ENCODE measurements at regions of chr16 and their contacts with region 1.

Region 1: DNA sequence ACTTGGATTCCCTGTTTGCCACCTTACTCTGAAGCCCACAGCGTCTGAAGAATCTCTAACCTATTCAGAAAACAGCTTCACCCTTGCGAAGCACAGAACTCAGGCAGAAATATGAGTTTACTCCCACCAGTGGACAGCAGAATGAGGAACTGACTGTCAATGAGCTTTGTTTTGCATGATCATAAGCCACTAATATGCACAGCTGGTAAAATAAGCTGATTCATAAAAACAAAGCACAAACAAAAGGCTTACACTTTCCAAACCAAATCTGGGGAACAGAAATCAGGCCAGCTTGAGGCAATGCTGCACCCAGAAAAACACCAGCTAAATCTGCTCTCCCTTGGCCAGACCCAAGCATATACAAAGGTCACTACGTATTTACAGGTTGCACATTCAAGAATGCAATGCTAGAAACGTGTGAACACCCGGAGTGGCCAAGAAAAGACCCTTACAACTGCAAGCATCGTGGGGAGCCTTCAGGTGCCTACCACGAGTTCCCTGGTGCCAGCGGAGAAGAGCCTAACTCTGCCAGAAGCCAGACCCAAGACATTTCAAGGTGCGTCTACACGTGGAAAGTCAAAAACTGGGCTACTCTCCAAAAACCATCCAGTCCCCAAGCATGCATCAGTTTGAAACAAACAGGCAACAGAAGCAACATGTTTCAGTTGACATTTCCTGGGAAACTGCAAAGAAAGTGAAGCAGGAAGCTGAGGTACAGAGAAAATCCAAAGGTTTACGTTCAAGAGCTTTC is 207.1 kb downstream of the ZFHX3 start:
- DNase-seq: no peak
- ATAC-seq: no peak
- H3K4me3 ChIP-seq: no peak overlapping the region
- H3K27ac ChIP-seq: no peak overlapping the region
- H3K4me1 ChIP-seq: no peaks in the 10 kb centered on the region
- H3K27me3 ChIP-seq: no peaks in the 10 kb centered on the region
- CTCF ChIP-seq: no peak
- EP300 ChIP-seq: no peak
- POLR2A ChIP-seq: no peak
- RAD21 ChIP-seq: no peak

Region 2: GRCh38 chr16:72811188-72811720 is 29.6 kb before region 1 on chr16:
- CTCF ChIA-PET with region 1: no interaction called
- POLR2A ChIA-PET with region 1: no interaction called
- in situ Hi-C with region 1: no loop called
- intact Hi-C with region 1: loop called (anchors 1 kb)
- DNase-seq: no peak
- ATAC-seq: no peak
- H3K4me3 ChIP-seq: no peak overlapping the region
- H3K27ac ChIP-seq: no peak overlapping the region
- H3K4me1 ChIP-seq: no peaks in the 10 kb centered on the region
- H3K27me3 ChIP-seq: no peaks in the 10 kb centered on the region
- CTCF ChIP-seq: no peak
- EP300 ChIP-seq: no peak
- POLR2A ChIP-seq: no peak
- RAD21 ChIP-seq: no peak